ENCODE measurements at regions of chr5 and their contacts with region 1.

Region 1: GRCh38 chr5:100777680-100778281 is 125.3 kb downstream of the ST8SIA4 start:
- DNase-seq: peak; percentile 91
- H3K4me3 ChIP-seq: peak overlapping the region in 1 of 3 experiments; percentile 21
- H3K27ac ChIP-seq: peak overlapping the region; percentile 73
- H3K4me1 ChIP-seq: peaks cover 22% of the 10 kb centered on the region
- H3K27me3 ChIP-seq: no peaks in the 10 kb centered on the region
- CTCF ChIP-seq: no peak
- POLR2A ChIP-seq: no peak

Region 2: DNA sequence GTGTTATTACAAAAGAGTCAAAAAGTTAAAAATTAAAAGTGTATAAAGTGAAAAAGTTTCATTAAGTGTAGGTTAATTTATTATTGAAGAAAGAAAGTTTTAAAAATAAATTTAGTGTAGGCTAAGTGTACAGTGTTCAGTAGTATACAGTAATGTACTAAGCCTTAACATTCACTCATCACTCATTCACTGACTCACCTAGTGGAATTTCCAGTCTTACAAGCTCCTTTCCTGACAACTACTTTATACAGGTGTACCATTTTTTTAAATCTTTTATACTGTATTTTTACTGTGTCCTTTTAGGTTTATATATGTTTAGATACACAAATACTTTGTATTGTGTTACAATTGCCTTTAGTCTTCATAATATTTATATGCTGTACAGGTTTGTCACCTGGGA is 772.8 kb before region 1 on chr5:
- CTCF ChIA-PET with region 1: no interaction called
- POLR2A ChIA-PET with region 1: no interaction called
- dilution Hi-C with region 1: no loop called
- intact Hi-C with region 1: no loop called
- DNase-seq: no peak
- H3K4me3 ChIP-seq: no peak overlapping the region
- H3K27ac ChIP-seq: no peak overlapping the region
- H3K4me1 ChIP-seq: no peaks in the 10 kb centered on the region
- H3K27me3 ChIP-seq: no peaks in the 10 kb centered on the region
- CTCF ChIP-seq: no peak
- POLR2A ChIP-seq: no peak

Region 3: DNA sequence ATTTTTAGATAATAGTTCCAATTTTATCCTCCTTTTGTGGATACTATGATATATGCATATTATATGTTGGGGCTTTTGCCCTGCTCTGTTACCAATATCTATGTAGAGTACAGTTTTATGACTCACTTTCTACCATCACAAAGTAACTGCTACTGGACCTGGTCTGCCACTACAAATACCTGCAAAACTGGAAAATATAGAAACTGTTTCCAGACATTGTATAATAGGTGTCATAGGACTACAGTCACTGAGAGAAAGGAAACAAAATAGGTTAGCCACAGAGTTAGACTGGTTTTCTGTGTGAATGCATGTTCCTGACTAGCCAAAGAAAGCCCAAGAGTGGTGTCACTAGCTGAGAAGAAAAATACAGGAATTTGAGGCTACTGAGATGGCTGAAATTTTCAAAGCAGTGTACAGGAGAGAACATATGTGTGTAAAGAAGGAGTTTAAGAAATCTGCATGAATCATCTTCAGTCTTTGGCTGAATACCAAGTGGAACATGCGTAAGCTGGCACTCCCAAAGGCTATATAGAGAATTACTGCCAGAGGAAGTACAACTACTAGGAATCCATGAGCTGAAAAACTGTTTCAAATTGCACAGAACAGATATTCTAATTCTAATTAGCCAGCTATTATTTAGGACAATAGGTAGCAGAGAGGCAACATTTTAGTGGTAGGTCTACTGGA is 271.7 kb before region 1 on chr5:
- CTCF ChIA-PET with region 1: no interaction called
- POLR2A ChIA-PET with region 1: no interaction called
- dilution Hi-C with region 1: no loop called
- intact Hi-C with region 1: no loop called
- DNase-seq: peak; percentile 82
- H3K4me3 ChIP-seq: no peak overlapping the region
- H3K27ac ChIP-seq: no peak overlapping the region
- H3K4me1 ChIP-seq: no peaks in the 10 kb centered on the region
- H3K27me3 ChIP-seq: no peaks in the 10 kb centered on the region
- CTCF ChIP-seq: peak in 1 of 2 donors; percentile 8
- POLR2A ChIP-seq: no peak

Region 4: DNA sequence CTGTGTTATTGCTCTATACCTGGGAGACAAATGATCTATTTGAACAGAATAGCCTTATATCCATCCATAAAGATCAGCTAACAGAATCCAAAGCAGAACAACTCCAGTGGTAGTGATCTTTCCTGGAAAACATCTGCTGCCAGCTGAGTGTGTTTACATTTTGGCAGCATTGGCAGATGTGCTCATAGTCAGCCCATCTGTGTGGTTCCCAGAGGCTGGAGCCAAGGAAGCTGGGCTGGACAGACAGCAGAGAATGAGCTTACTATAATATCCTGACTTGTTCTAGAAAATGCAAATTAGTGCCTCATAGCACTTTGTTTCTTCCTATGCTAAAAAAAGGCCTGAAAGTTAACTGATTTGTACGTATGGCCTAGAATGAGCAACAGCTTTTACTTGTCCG is 25.6 kb after region 1 on chr5:
- CTCF ChIA-PET with region 1: interaction called, 3 read pairs
- POLR2A ChIA-PET with region 1: no interaction called
- dilution Hi-C with region 1: no loop called
- intact Hi-C with region 1: loop called (anchors 1 kb)
- DNase-seq: no peak
- H3K4me3 ChIP-seq: no peak overlapping the region
- H3K27ac ChIP-seq: no peak overlapping the region
- H3K4me1 ChIP-seq: no peaks in the 10 kb centered on the region
- H3K27me3 ChIP-seq: no peaks in the 10 kb centered on the region
- CTCF ChIP-seq: no peak
- POLR2A ChIP-seq: no peak

Region 5: GRCh38 chr5:100939981-100940380 is 162.2 kb after region 1 on chr5:
- CTCF ChIA-PET with region 1: no interaction called
- POLR2A ChIA-PET with region 1: no interaction called
- dilution Hi-C with region 1: no loop called
- intact Hi-C with region 1: loop called (anchors 1 kb)
- DNase-seq: no peak
- H3K4me3 ChIP-seq: no peak overlapping the region
- H3K27ac ChIP-seq: no peak overlapping the region
- H3K4me1 ChIP-seq: no peaks in the 10 kb centered on the region
- H3K27me3 ChIP-seq: no peaks in the 10 kb centered on the region
- CTCF ChIP-seq: no peak
- POLR2A ChIP-seq: no peak

Region 6: GRCh38 chr5:101045689-101046088 is 267.9 kb after region 1 on chr5:
- CTCF ChIA-PET with region 1: no interaction called
- POLR2A ChIA-PET with region 1: no interaction called
- dilution Hi-C with region 1: no loop called
- intact Hi-C with region 1: no loop called
- DNase-seq: peak; percentile 55
- H3K4me3 ChIP-seq: no peak overlapping the region
- H3K27ac ChIP-seq: no peak overlapping the region
- H3K4me1 ChIP-seq: no peaks in the 10 kb centered on the region
- H3K27me3 ChIP-seq: no peaks in the 10 kb centered on the region
- CTCF ChIP-seq: no peak
- POLR2A ChIP-seq: no peak